ENCODE measurements at regions of chr7 and their contacts with region 1.

Region 1: DNA sequence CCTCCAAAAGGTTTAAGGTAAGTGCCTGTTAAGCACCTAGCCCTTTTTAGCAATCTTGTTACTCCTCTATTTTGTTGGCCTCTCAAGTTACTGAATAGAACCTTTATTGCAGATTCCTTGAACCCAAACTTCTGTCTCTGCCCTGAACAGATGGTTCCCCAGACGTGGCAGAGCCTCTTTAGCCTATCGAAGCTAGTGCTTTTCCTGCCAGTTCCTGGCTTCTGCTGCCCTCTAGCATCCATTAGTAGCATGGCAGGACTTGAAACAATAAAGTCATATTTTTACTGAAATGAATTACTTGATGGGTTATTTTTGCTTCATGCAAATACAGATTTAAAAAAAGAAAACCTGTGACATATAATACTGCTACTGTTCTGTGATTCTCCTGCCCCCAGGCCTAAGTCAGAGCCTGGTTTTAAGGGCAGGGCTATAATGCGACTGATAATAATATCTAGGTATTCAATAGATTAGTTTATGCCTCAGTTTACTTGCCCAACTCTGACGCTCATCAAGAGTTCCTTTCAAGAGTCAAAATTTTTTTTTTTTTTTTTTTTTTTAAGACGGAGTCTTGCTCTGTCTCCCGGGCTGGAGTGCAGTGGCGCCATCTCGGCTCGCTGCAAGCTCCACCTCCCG is 84.3 kb upstream of the PHF14 start:
- DNase-seq: peak; percentile 8
- H3K4me3 ChIP-seq: no peak overlapping the region
- H3K27ac ChIP-seq: no peak overlapping the region
- H3K27me3 ChIP-seq: no peaks in the 10 kb centered on the region
- CTCF ChIP-seq: peak; percentile 73

Region 2: DNA sequence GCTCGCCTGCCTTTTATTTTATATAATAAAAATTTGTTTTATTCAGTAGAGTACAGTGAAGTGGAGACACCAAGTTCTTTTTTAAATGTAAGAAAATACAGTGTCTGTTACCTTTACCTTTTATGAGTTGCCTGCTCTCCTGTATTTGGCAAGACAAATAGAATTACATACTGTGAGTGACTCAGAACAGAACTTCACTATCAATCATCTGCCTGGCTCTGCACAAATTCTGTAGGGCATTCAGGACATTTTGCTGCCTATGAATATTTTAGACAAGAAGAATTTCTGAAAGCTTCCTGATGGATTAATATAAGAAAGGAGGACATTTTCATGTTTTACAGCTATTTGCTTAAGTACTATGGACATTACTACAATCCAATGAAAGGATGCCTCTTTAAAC is 51.2 kb before region 1 on chr7:
- CTCF ChIA-PET with region 1: no interaction called
- POLR2A ChIA-PET with region 1: no interaction called
- DNase-seq: no peak
- H3K4me3 ChIP-seq: no peak overlapping the region
- H3K27ac ChIP-seq: no peak overlapping the region
- H3K27me3 ChIP-seq: no peaks in the 10 kb centered on the region
- CTCF ChIP-seq: no peak

Region 3: DNA sequence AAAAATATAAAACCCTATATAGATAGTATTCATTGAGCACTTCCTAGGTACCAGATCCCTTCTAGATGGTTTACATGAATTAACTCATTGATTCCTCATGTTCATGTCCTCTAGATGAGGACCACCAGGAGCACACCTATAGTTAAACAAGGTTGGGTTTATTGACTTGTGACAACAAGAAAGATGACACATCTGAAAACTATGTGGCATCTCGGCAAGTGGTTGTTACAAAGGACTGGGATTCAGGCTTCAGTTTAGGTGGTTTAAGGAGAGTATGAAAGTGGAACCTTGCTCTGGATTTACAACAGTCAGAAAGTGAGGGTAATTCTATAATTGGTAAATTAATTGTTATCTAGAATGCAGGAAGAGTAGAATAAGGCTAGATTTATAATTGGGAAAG is 14.7 kb before region 1 on chr7:
- CTCF ChIA-PET with region 1: interaction called, 11 read pairs
- POLR2A ChIA-PET with region 1: no interaction called
- DNase-seq: no peak
- H3K4me3 ChIP-seq: no peak overlapping the region
- H3K27ac ChIP-seq: no peak overlapping the region
- H3K27me3 ChIP-seq: no peaks in the 10 kb centered on the region
- CTCF ChIP-seq: no peak

Region 4: GRCh38 chr7:10924366-10924765 is 35.0 kb after region 1 on chr7:
- CTCF ChIA-PET with region 1: no interaction called
- POLR2A ChIA-PET with region 1: no interaction called
- DNase-seq: no peak
- H3K4me3 ChIP-seq: no peak overlapping the region
- H3K27ac ChIP-seq: no peak overlapping the region
- H3K27me3 ChIP-seq: no peaks in the 10 kb centered on the region
- CTCF ChIP-seq: no peak

Region 5: DNA sequence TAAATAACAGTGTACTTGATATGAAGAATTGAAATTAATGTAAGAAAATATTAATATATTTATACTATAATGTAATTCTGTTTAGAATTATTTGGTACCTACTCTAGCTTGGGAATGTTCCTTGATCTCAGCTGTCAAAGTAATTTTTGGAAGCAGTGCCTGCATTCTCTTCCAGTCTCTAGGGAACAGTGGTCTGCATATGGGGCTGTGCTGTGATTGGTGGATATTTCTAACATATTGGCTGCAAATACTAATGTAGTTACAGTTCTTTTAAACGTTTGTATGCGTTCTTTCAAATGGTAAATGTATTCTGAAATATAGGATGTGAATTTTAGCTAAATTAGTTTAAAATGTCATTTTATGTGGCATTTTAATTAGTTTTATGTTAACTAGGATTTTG is 171.5 kb after region 1 on chr7:
- CTCF ChIA-PET with region 1: no interaction called
- POLR2A ChIA-PET with region 1: no interaction called
- DNase-seq: no peak
- H3K4me3 ChIP-seq: no peak overlapping the region
- H3K27ac ChIP-seq: no peak overlapping the region
- H3K27me3 ChIP-seq: no peaks in the 10 kb centered on the region
- CTCF ChIP-seq: no peak

Region 6: GRCh38 chr7:11233871-11234270 is 344.5 kb after region 1 on chr7:
- CTCF ChIA-PET with region 1: interaction called, 12 read pairs
- POLR2A ChIA-PET with region 1: no interaction called
- DNase-seq: no peak
- H3K4me3 ChIP-seq: no peak overlapping the region
- H3K27ac ChIP-seq: no peak overlapping the region
- H3K27me3 ChIP-seq: no peaks in the 10 kb centered on the region
- CTCF ChIP-seq: no peak

Measured in AG04450 (cell line).